ENCODE measurements at regions of chr20 and their contacts with region 1.

Region 1: DNA sequence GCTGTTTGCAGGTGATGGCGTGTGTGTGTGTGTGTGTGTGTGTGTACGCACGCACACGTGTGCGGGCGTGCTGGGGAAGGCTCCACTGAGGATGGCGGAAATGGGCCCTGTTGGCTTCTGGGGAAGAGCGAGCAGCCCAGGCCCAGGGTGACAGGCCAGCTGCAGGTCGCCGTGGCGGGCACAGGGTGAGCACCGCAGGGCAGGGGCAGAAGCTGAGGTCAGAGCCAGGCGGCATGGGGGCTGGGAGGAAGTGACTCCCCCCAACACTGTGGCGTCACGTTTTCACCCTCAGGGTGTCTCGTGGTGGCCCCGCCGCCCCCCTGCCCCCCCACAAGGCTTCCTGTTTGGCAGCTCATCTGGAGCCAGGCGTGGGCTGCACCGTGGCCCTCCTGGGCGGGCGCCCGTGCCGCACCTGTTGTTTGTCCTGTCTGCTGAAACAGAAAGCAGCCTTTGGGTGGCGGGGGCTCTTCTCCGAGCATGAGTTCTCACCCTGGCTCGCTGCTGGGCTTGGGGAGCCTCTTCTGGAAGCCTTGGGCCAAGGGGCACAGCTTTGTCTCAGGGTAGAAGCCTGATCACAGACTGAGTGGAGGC is 7.1 kb downstream of the RBM38 start:
- DNase-seq: peak; percentile 83
- ATAC-seq: peak; percentile 65
- H3K4me3 ChIP-seq: peak overlapping the region; percentile 72
- H3K27ac ChIP-seq: peak overlapping the region; percentile 97
- H3K4me1 ChIP-seq: peaks cover 69% of the 10 kb centered on the region
- H3K27me3 ChIP-seq: no peaks in the 10 kb centered on the region
- CTCF ChIP-seq: no peak
- EP300 ChIP-seq: peak; percentile 90 to 93
- POLR2A ChIP-seq: peak; percentile 42; the same call in 1 of the 2 replicates
- RAD21 ChIP-seq: peak; percentile 10; the same call in 1 of the 2 replicates

Region 2: DNA sequence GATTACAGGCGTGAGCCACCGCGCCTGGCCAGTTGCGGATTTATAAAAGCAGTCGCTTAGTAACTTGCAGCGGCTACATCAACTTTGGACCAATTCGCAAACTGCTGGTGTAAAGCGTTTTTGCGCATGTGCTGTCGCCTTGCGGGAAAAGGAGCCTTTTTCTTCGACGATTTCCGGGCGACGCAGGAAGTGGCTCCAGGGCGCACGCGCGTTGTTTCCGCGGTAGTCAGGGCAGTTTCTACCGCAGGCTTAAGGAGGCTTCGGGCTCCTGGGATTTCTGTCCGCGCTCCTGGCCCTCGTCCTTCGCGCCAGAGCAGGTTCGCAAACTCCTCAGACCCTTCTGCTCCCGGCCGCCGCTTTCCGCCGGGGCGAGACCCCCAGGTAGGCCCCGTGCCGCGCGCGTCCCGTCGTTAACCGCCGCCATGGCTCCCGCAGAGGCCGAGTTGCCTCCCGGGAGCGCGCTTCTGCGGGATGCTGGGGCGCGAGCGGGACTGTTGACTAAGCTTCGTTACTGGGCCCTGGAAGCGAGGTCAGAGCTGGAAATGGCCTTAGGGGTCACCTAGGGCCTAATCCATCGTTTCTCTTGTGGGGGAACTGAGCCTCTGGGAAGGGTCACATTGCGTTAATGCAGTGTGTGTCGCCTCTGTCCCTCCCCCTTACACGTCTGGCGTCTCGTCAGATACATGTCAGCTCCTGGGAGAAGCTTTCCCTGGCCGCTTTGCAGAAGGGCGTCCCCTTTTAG is 47.1 kb before region 1 on chr20 and contains the start of gene RAE1:
- CTCF ChIA-PET with region 1: no interaction called
- POLR2A ChIA-PET with region 1: no interaction called
- RAD21 ChIA-PET with region 1: no interaction called
- SMC1A ChIA-PET with region 1: no interaction called
- in situ Hi-C with region 1: no loop called
- intact Hi-C with region 1: no loop called
- DNase-seq: peak; percentile 68
- ATAC-seq: peak; percentile 95
- H3K4me3 ChIP-seq: peak within 1 kb of the TSS; percentile 96
- H3K27ac ChIP-seq: peak within 1 kb of the TSS; percentile 86
- H3K4me1 ChIP-seq: peaks cover 4% of the 10 kb centered on the region; the same call in 1 of the 2 replicates
- H3K27me3 ChIP-seq: no peaks in the 10 kb centered on the region
- CTCF ChIP-seq: no peak
- EP300 ChIP-seq: no peak
- POLR2A ChIP-seq: peak; percentile 91
- RAD21 ChIP-seq: no peak
- polyA plus RNA-seq, gene RAE1: 93.0 to 107 TPM

Region 3: DNA sequence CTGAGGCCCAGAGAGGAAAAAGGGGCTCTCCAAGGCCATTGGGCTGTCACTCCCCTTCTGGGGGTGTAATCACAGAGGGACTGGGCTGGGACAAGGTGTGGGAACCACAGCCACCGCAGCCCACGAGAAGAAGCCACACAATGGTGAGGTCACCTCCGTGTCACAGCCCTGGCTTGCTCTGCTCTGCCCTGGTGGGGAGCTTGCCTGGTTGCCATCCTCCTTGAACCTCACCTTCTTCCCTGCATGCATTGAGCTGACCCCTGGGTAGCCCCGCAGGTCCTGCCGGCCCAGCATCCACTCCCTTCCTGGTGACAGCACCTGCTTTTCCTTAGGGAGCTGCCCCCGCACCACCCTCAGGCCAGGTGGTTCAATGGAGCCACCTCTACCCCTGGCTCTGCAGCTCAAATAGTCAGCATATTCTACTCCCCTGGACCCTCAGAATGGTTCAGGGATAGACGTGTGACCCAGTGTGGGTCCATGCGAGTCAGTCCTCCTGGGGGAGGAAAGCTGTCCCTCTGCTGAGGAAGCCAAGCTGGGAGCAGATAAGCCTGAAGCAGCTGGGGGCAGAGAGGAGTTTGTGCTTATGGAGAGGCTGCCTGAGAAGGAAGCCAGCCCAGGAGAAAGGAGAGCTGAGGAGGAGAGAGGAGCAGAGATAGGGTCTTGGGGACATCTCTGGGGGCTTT is 14.2 kb after region 1 on chr20:
- CTCF ChIA-PET with region 1: interaction called, 6 read pairs
- POLR2A ChIA-PET with region 1: interaction called, 9 read pairs
- RAD21 ChIA-PET with region 1: interaction called, 20 read pairs
- SMC1A ChIA-PET with region 1: interaction called, 6 read pairs
- in situ Hi-C with region 1: no loop called
- intact Hi-C with region 1: no loop called
- DNase-seq: no peak
- ATAC-seq: peak; percentile 79
- H3K4me3 ChIP-seq: no peak overlapping the region
- H3K27ac ChIP-seq: no peak overlapping the region
- H3K4me1 ChIP-seq: no peaks in the 10 kb centered on the region
- H3K27me3 ChIP-seq: no peaks in the 10 kb centered on the region
- CTCF ChIP-seq: no peak
- EP300 ChIP-seq: 0 out of 4 replicates have a peak, but pooled peaks of 1 of the 2 experiments have one; percentile 62
- POLR2A ChIP-seq: no peak
- RAD21 ChIP-seq: no peak

Region 4: GRCh38 chr20:57473246-57474048 is 75.1 kb after region 1 on chr20:
- CTCF ChIA-PET with region 1: interaction called, 28 read pairs
- POLR2A ChIA-PET with region 1: interaction called, 20 read pairs
- RAD21 ChIA-PET with region 1: interaction called, 26 read pairs
- SMC1A ChIA-PET with region 1: interaction called, 22 read pairs
- in situ Hi-C with region 1: no loop called
- intact Hi-C with region 1: no loop called
- DNase-seq: peak; percentile 68
- ATAC-seq: peak; percentile 82
- H3K4me3 ChIP-seq: no peak overlapping the region
- H3K27ac ChIP-seq: peak overlapping the region; percentile 43
- H3K4me1 ChIP-seq: peaks cover 64% of the 10 kb centered on the region
- H3K27me3 ChIP-seq: no peaks in the 10 kb centered on the region
- CTCF ChIP-seq: 0 out of 6 replicates have a peak, but pooled peaks of 2 of the 3 experiments have one; percentile 10 to 11
- EP300 ChIP-seq: no peak
- POLR2A ChIP-seq: 0 out of 2 replicates have a peak, but pooled peaks have one; percentile 28
- RAD21 ChIP-seq: peak; percentile 3; the same call in 1 of the 2 replicates

Region 5: DNA sequence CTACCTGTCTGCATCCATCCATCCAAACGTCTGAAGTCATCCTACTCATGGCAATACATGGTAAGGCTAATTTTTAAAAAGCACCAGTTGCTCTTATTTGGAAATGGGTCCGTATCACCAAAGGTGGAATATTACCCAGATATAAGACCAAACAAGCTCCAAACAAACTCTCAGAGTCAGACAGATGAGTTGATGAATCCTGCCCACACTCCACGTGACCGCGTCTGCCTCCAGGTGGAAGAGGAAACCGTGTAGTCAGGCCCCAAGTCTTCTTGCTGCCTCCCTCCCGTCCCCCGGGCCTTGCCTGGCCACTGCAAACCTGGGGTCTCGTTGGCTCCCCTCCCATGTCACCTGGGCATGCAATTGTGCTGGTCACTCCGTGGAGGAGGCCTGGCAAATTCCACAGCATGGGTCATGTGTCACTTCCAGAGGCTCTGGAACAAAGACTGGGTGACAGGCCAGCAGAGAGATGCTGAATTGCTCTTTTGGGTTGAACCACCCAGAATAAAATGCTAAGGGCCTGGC is 94.8 kb after region 1 on chr20:
- CTCF ChIA-PET with region 1: interaction called, 26 read pairs
- POLR2A ChIA-PET with region 1: interaction called, 12 read pairs
- RAD21 ChIA-PET with region 1: interaction called, 8 read pairs
- SMC1A ChIA-PET with region 1: interaction called, 25 read pairs
- in situ Hi-C with region 1: no loop called
- intact Hi-C with region 1: loop called (anchors 1 kb)
- DNase-seq: no peak
- ATAC-seq: no peak
- H3K4me3 ChIP-seq: no peak overlapping the region
- H3K27ac ChIP-seq: no peak overlapping the region
- H3K4me1 ChIP-seq: no peaks in the 10 kb centered on the region
- H3K27me3 ChIP-seq: peaks cover 0 to 2% of the 10 kb centered on the region in 2 experiments; a peak in 1 of 4 replicates
- CTCF ChIP-seq: no peak
- EP300 ChIP-seq: no peak
- POLR2A ChIP-seq: no peak
- RAD21 ChIP-seq: no peak

Region 6: DNA sequence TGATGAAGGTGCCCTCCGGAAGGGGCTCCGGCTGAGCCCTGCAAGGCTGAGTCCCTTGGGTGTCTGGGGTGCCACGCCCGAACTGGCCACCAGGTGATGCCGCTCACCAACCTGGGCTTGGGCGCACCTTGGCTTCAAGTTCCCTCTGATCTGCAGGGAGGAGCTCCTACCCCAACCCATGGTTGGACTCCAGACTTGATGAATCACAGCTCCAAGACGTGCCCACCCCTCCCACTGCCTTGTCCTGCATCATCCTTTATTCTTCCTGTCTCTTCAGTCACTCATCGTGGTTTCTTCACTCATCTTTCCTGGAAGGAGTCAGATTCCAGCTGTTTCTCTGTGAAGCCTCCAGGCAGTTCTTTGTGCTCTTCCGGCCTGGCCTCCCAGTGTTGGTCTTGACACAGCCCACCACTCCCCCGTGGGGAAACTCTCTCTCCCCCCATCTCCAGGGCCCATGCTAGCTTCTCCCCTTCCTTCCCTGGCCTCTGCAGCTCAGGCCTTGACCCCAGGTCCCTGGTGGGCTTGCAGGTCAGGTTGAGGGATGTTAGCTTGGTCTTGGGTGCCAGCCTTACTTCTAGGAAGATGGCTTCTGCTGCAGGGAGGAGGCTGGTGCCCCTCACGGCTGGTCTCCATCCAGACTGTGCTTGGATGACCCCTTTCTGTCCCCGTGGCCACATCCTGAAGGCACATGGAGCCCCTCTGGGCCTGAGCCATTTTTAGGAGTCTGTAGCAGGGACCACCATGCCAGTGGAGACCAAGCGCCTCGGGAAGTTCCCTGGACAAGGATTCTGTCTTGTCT is 224.5 kb after region 1 on chr20:
- CTCF ChIA-PET with region 1: interaction called, 7 read pairs
- POLR2A ChIA-PET with region 1: interaction called, 4 read pairs
- RAD21 ChIA-PET with region 1: interaction called, 6 read pairs
- SMC1A ChIA-PET with region 1: interaction called, 4 read pairs
- in situ Hi-C with region 1: no loop called
- intact Hi-C with region 1: loop called (anchors 5 kb)
- DNase-seq: no peak
- ATAC-seq: peak; percentile 24
- H3K4me3 ChIP-seq: no peak overlapping the region
- H3K27ac ChIP-seq: no peak overlapping the region
- H3K4me1 ChIP-seq: peaks cover 40% of the 10 kb centered on the region
- H3K27me3 ChIP-seq: no peaks in the 10 kb centered on the region
- CTCF ChIP-seq: peak; percentile 64 to 93 (median 90)
- EP300 ChIP-seq: no peak
- POLR2A ChIP-seq: no peak
- RAD21 ChIP-seq: peak; percentile 73